ENCODE measurements at regions of chr17 and their contacts with region 1.

Region 1: GRCh38 chr17:39872751-39873150 is 4.7 kb downstream of the ZPBP2 start:
- DNase-seq: peak in 1 of 3 donors; percentile 33
- H3K4me3 ChIP-seq: no peak overlapping the region
- H3K27ac ChIP-seq: no peak overlapping the region
- H3K4me1 ChIP-seq: no peaks in the 10 kb centered on the region
- H3K27me3 ChIP-seq: peaks cover 0 to 23% (median 10%) of the 10 kb centered on the region in 5 experiments

Region 2: GRCh38 chr17:39822051-39822451 is 50.7 kb before region 1 on chr17:
- CTCF ChIA-PET with region 1: no interaction called
- POLR2A ChIA-PET with region 1: no interaction called
- DNase-seq: peak in 2 of 3 donors; percentile 56 to 73
- H3K4me3 ChIP-seq: no peak overlapping the region
- H3K27ac ChIP-seq: no peak overlapping the region
- H3K4me1 ChIP-seq: peaks cover 0 to 5% (median 2%) of the 10 kb centered on the region in 4 experiments
- H3K27me3 ChIP-seq: peaks cover 0 to 3% (median 0%) of the 10 kb centered on the region in 5 experiments

Region 3: DNA sequence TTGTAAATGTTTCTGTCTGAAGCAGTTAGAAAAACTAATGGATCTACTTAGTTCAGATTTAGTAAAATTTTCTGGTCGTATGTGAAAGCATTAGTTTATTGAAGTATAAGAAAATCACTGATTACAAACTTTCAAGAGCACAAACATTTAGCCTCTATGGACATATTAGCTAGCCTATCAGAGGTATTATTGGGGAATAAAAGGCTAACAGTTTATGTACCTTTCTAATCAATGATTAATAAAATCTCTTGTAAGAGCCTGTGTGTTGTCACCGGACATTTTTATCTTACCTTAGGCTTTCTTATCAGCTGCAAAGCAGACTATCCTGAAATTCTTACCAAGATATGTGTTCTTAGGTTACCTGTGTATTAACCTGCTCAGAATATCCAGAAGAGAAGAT is 16.4 kb after region 1 on chr17:
- CTCF ChIA-PET with region 1: interaction called, 12 read pairs
- POLR2A ChIA-PET with region 1: no interaction called
- DNase-seq: no peak
- H3K4me3 ChIP-seq: no peak overlapping the region
- H3K27ac ChIP-seq: no peak overlapping the region
- H3K4me1 ChIP-seq: peaks cover 0 to 11% (median 0%) of the 10 kb centered on the region in 4 experiments
- H3K27me3 ChIP-seq: no peaks in the 10 kb centered on the region

Region 4: GRCh38 chr17:39952680-39953470 is 80.1 kb after region 1 on chr17:
- CTCF ChIA-PET with region 1: interaction called, 22 read pairs
- POLR2A ChIA-PET with region 1: no interaction called
- DNase-seq: peak; percentile 92 to 96 (median 96)
- H3K4me3 ChIP-seq: peak overlapping the region; percentile 37 to 81 (median 57)
- H3K27ac ChIP-seq: peak overlapping the region in 1 of 2 experiments; percentile 58
- H3K4me1 ChIP-seq: peaks cover 0 to 20% (median 14%) of the 10 kb centered on the region in 4 experiments
- H3K27me3 ChIP-seq: no peaks in the 10 kb centered on the region

Region 5: DNA sequence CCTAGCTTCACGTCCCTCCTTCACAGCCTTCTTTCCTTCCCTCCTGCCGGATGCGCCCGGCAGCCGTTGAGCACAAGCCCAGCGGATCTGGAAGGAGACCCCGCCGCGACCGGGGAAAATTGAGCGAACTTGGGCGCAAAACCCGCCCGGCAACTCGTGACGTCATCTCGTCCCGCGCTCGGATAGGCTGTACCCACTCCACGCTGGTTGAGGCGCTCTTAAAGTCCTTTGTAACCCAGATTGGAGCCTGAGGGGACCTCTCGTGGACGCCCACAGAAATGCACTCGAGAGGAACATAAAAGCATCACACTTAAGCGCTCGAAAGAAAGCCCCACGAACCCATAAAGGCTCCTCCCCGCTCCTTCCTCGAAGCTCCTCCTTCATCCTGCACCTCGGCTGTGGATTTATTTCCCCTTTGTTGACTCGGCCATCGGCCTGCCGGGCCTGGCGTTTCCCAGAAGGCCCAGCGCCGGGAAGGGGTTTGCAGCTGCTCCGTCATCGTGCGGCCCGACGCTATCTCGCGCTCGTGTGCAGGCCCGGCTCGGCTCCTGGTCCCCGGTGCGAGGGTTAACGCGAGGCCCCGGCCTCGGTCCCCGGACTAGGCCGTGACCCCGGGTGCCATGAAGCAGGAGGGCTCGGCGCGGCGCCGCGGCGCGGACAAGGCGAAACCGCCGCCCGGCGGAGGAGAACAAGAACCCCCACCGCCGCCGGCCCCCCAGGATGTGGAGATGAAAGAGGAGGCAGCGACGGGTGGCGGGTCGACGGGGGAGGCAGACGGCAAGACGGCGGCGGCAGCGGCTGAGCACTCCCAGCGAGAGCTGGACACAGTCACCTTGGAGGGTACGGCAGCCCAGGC is 107.8 kb after region 1 on chr17 and contains the start of gene PSMD3:
- CTCF ChIA-PET with region 1: interaction called, 11 read pairs
- POLR2A ChIA-PET with region 1: no interaction called
- DNase-seq: peak; percentile 100
- H3K4me3 ChIP-seq: peak within 1 kb of the TSS; percentile 68 to 99 (median 88)
- H3K27ac ChIP-seq: peak within 1 kb of the TSS; percentile 93 to 96
- H3K4me1 ChIP-seq: peaks cover 18 to 29% (median 23%) of the 10 kb centered on the region in 4 experiments
- H3K27me3 ChIP-seq: peaks cover 0 to 4% (median 0%) of the 10 kb centered on the region in 5 experiments

Region 6: GRCh38 chr17:40026816-40027613 is 154.3 kb after region 1 on chr17:
- CTCF ChIA-PET with region 1: interaction called, 13 read pairs
- POLR2A ChIA-PET with region 1: no interaction called
- DNase-seq: peak; percentile 67 to 83 (median 75)
- H3K4me3 ChIP-seq: no peak overlapping the region
- H3K27ac ChIP-seq: no peak overlapping the region
- H3K4me1 ChIP-seq: peaks cover 0 to 6% (median 0%) of the 10 kb centered on the region in 4 experiments
- H3K27me3 ChIP-seq: no peaks in the 10 kb centered on the region

Measured in common myeloid progenitor, CD34-positive (primary cell).